AG04449 (cell line): ENCODE measurements at regions of chr9 and their contacts with region 1.

Region 1: DNA sequence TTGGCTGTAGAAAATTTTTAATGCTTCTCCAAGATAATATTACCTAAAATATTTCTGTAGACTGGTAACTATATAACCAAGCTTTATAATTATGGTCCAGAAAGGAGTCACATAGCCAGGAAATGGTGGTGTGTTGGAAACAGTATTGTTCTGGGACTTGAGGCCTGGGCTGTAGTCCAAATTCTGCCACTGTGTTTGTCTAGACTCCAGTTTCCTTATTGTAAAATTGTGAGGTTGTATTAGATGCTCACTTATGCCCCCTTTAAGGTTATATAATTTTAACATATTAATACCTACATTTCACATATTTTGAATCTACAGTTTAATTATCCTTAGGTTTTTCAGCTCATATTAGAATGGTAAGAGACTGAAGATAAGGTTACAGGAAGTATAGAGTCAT is 42.4 kb downstream of the STX17 start:
- DNase-seq: no peak
- H3K4me3 ChIP-seq: no peak overlapping the region
- CTCF ChIP-seq: no peak

Region 2: DNA sequence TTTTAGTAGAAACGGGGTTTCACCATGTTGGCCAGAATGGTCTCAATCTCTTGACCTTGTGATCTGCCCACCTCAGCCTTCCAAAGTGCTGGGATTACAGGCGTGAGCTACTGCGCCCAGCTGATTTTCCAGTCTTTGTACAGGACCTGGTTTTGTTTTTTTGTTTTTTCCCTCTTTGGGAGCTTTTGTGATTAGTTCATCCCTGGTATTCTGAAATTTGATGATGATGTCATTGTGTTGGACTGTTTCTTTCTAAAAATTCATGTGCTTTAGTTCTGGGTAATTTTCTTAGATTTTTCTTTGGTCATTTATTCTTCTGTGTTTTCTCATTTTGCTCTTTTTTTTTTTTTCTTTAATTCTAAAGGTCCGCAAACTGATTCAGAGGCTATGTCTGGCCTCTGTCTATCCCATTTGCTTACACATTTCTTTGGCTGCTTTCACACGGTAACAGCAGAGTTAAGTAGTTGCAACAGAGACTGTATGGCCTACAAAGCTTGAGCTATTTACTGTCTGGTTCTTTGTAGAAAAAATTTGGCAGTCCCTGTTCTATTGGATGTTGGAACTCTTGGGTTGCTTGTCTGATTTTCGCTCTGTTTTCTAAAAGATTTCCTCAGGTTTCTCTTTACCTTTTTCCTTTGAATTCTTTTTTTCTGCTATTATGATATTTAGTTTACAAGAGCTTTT is 17.6 kb before region 1 on chr9:
- CTCF ChIA-PET with region 1: interaction called, 16 read pairs
- POLR2A ChIA-PET with region 1: no interaction called
- DNase-seq: no peak
- H3K4me3 ChIP-seq: no peak overlapping the region
- CTCF ChIP-seq: no peak

Region 3: DNA sequence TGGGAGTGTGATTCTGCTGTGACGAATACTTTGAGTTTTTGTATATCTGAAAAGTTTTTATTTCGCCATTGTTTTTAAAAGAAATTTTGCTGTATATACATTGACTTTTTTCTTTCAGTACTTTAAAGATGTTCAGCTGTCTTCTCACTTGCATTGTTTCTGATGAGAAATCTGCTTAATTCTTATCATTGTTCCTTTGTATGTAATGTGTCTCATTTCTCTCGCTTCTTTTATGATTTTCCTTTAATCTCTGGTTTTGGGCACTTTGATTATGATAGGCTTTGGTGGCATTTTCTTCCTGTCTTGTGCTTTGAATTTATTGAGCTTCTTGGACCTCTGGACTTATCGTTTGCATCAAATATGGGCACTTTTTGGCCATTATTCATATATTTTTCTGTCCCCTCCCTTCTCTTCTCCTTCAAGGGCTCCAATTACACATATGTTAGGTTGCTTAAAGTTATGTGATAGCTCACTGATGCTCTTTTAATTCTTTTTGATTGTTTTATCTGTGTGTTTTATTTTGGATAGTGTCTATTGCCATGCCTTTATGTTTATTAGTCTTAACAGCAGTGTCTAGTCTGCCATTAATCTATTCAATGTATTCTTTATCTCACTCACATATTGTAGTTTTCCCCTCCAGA is 11.8 kb before region 1 on chr9:
- CTCF ChIA-PET with region 1: interaction called, 16 read pairs
- POLR2A ChIA-PET with region 1: no interaction called
- DNase-seq: no peak
- H3K4me3 ChIP-seq: no peak overlapping the region
- CTCF ChIP-seq: no peak